IMR-90 (cell line): ENCODE measurements at regions of chr21 and their contacts with region 1.

Region 1: GRCh38 chr21:41612674-41613532 is 104.9 kb upstream of the TMPRSS2 start:
- DNase-seq: peak; percentile 90
- ATAC-seq: peak; percentile 66
- H3K4me3 ChIP-seq: no peak overlapping the region
- H3K27ac ChIP-seq: peak overlapping the region; percentile 6; the same call in 1 of the 2 replicates
- H3K4me1 ChIP-seq: peaks cover 19% of the 10 kb centered on the region
- H3K27me3 ChIP-seq: peaks cover 7% of the 10 kb centered on the region
- CTCF ChIP-seq: peak; percentile 73
- POLR2A ChIP-seq: no peak
- RAD21 ChIP-seq: peak; percentile 75

Region 2: GRCh38 chr21:41283211-41283818 is 329.6 kb before region 1 on chr21:
- CTCF ChIA-PET with region 1: interaction called, 9 read pairs
- POLR2A ChIA-PET with region 1: no interaction called
- dilution Hi-C with region 1: no loop called
- in situ Hi-C with region 1: no loop called
- intact Hi-C with region 1: loop called (anchors 1 kb)
- DNase-seq: peak; percentile 87
- ATAC-seq: peak; percentile 97
- H3K4me3 ChIP-seq: no peak overlapping the region
- H3K27ac ChIP-seq: no peak overlapping the region
- H3K4me1 ChIP-seq: peaks cover 2% of the 10 kb centered on the region; the same call in 1 of the 2 replicates
- H3K27me3 ChIP-seq: no peaks in the 10 kb centered on the region; the same call in 1 of the 2 replicates
- CTCF ChIP-seq: peak; percentile 93
- POLR2A ChIP-seq: 0 out of 2 replicates have a peak, but pooled peaks have one; percentile 33
- RAD21 ChIP-seq: peak; percentile 94

Region 3: GRCh38 chr21:41768437-41769061 is 155.6 kb after region 1 on chr21:
- CTCF ChIA-PET with region 1: interaction called, 61 read pairs
- POLR2A ChIA-PET with region 1: no interaction called
- dilution Hi-C with region 1: no loop called
- in situ Hi-C with region 1: loop called (anchors 5 kb)
- intact Hi-C with region 1: no loop called
- DNase-seq: peak; percentile 85
- ATAC-seq: peak; percentile 71
- H3K4me3 ChIP-seq: peak overlapping the region; percentile 38
- H3K27ac ChIP-seq: no peak overlapping the region
- H3K4me1 ChIP-seq: peaks cover 4% of the 10 kb centered on the region
- H3K27me3 ChIP-seq: peaks cover 91% of the 10 kb centered on the region
- CTCF ChIP-seq: peak; percentile 51
- POLR2A ChIP-seq: 0 out of 2 replicates have a peak, but pooled peaks have one; percentile 29
- RAD21 ChIP-seq: peak; percentile 57

Region 4: DNA sequence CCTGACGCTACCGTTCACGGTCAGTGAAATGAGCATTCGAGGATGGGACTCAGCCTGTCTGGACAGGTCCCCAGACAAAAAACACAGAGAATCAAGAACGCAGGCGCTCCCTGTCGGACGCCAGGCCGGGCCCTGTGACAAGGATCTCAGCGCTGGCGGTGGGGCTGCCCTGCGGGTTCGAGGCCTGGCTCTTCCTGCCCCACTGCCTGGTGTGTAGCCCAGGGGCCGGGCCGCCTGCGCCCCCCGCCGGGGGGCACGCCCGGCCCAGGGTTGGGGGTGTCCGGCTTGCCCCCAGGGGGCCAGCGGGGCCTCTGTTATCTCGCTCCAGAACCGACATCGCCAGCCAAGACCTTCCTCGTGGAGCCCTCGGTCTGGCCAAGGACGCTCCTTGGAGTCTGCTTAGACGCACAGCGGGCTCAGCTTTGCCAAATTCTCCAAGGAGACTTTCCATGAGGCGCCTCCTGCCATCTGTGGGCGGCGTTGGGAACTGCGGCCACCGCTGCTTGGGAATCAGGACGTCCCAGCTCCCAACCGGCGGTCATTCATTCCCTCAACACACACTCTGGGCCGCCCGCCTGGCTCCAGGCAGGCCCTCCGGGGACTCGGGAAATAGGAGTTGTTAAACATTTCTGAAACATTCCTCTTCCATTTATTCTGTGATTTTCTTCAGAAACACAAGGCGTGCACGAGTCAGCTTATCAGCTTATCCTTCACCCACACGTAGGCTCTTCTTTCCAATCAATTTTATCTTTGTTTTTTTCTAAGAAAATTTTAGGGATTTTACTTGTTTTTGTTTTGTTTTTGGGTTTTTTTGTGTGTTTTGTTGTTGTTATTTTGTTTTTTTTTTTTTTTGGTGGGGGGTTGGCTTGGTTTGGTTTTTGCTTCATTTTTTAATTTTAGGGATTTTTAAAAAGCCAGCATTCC is 165.3 kb after region 1 on chr21:
- CTCF ChIA-PET with region 1: interaction called, 61 read pairs
- POLR2A ChIA-PET with region 1: no interaction called
- dilution Hi-C with region 1: no loop called
- in situ Hi-C with region 1: no loop called
- intact Hi-C with region 1: loop called (anchors 1 kb)
- DNase-seq: peak; percentile 69
- ATAC-seq: peak; percentile 96
- H3K4me3 ChIP-seq: no peak overlapping the region
- H3K27ac ChIP-seq: no peak overlapping the region
- H3K4me1 ChIP-seq: no peaks in the 10 kb centered on the region
- H3K27me3 ChIP-seq: peaks cover 57% of the 10 kb centered on the region
- CTCF ChIP-seq: peak; percentile 73
- POLR2A ChIP-seq: no peak
- RAD21 ChIP-seq: peak; percentile 80

Region 5: GRCh38 chr21:41816220-41817165 is 203.6 kb after region 1 on chr21:
- CTCF ChIA-PET with region 1: interaction called, 12 read pairs
- POLR2A ChIA-PET with region 1: no interaction called
- dilution Hi-C with region 1: no loop called
- in situ Hi-C with region 1: loop called (anchors 5 kb)
- intact Hi-C with region 1: loop called (anchors 1 kb)
- DNase-seq: peak; percentile 46
- ATAC-seq: peak; percentile 84
- H3K4me3 ChIP-seq: no peak overlapping the region
- H3K27ac ChIP-seq: no peak overlapping the region
- H3K4me1 ChIP-seq: no peaks in the 10 kb centered on the region
- H3K27me3 ChIP-seq: no peaks in the 10 kb centered on the region
- CTCF ChIP-seq: peak; percentile 75
- POLR2A ChIP-seq: no peak
- RAD21 ChIP-seq: peak; percentile 76

Region 6: GRCh38 chr21:41879190-41879998 is 266.5 kb after region 1 on chr21 and contains the start of gene PRDM15:
- CTCF ChIA-PET with region 1: interaction called, 3 read pairs
- POLR2A ChIA-PET with region 1: no interaction called
- dilution Hi-C with region 1: no loop called
- in situ Hi-C with region 1: no loop called
- intact Hi-C with region 1: loop called (anchors 2 kb)
- DNase-seq: peak; percentile 82
- ATAC-seq: peak; percentile 88
- H3K4me3 ChIP-seq: peak within 1 kb of the TSS; percentile 88
- H3K27ac ChIP-seq: peak within 1 kb of the TSS; percentile 99
- H3K4me1 ChIP-seq: peaks cover 3% of the 10 kb centered on the region
- H3K27me3 ChIP-seq: no peaks in the 10 kb centered on the region
- CTCF ChIP-seq: no peak
- POLR2A ChIP-seq: 0 out of 2 replicates have a peak, but pooled peaks have one; percentile 31
- RAD21 ChIP-seq: no peak
- total RNA-seq, gene PRDM15: 5.6 and 8.8 TPM in 2 replicates

Region 7: GRCh38 chr21:41933313-41934086 is 320.6 kb after region 1 on chr21:
- CTCF ChIA-PET with region 1: interaction called, 6 read pairs
- POLR2A ChIA-PET with region 1: no interaction called
- dilution Hi-C with region 1: no loop called
- in situ Hi-C with region 1: no loop called
- intact Hi-C with region 1: loop called (anchors 1 kb)
- DNase-seq: peak; percentile 56
- ATAC-seq: peak; percentile 22
- H3K4me3 ChIP-seq: peak overlapping the region; percentile 19
- H3K27ac ChIP-seq: peak overlapping the region; percentile 69
- H3K4me1 ChIP-seq: peaks cover 19% of the 10 kb centered on the region
- H3K27me3 ChIP-seq: no peaks in the 10 kb centered on the region
- CTCF ChIP-seq: peak; percentile 54
- POLR2A ChIP-seq: no peak
- RAD21 ChIP-seq: peak; percentile 47